ENCODE measurements at regions of chr7 and their contacts with region 1.

Region 1: DNA sequence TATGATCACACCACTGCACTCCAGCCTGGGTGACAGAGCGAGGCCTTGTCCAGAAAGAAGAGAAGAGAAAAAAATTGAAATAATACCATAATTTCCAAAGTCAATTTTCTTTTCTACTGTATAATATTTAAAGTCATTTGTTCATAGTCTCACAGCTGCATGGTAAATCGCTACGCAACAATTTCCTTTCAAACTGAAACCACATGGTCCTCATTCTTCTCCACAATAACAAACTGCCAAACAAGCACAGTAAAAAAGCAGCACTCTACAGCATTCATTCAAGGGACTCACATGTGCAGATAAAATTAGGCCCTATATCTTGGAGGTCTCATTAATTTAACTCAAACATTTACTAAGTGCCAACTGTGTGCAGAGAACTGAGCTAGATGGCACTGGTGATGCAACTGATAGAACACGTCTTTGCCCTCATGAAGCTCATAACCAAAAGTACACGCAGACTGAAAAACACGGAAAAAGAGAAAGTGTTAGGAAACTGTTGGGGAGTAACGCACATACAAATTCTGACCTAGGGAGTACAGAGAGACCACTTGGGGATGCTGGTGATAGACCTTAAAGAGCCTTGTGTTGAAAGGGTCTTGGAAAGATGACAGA is 68.4 kb upstream of the SRRM3 start:
- DNase-seq: no peak
- ATAC-seq: no peak
- H3K4me3 ChIP-seq: no peak overlapping the region
- H3K27ac ChIP-seq: no peak overlapping the region
- H3K4me1 ChIP-seq: no peaks in the 10 kb centered on the region
- H3K27me3 ChIP-seq: no peaks in the 10 kb centered on the region
- CTCF ChIP-seq: no peak
- POLR2A ChIP-seq: no peak
- RAD21 ChIP-seq: no peak

Region 2: DNA sequence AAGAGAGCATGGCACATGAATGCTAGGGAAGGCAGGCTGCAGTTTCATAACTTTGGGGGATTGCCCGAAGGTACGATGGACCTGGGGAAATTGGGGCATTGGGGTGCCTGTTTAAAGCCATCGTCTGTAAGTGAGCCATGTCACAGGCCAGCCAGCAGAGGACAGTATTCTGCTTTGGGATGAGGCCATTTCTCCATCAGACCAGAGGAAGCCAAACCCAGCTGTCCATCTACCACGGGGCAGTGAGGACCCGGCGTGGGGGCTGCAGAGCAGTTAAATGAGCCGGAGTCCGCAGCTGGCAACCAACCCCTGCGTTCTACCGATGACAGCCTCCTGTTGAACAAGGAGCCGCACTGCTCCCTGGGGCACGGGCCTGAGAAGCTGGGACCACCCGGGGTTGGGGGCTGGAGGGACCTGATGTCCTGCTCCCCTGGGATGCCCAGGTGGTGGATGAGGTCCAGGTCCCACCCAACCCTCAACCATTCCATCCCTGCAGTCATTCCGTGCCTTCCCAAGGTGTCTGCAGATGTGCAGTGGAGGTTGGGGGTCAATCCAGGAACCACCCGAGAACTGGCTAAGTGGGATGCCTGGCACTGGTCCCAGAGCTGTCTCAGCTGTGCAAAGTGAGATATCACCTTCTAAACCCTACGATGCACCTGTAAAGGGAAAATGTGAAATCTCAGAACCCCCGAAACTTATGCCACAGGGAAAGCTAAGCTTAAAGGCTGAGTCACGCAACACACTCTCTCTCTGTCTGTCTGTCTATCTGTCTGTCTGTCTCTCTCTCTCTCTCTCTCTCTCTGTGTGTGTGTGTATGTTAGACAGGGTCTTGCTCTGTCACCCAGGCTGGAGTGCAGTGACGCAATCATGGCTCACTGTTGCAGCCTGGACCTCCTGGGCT is 266.5 kb before region 1 on chr7:
- CTCF ChIA-PET with region 1: no interaction called
- POLR2A ChIA-PET with region 1: no interaction called
- RAD21 ChIA-PET with region 1: no interaction called
- intact Hi-C with region 1: loop called (anchors 2 kb)
- DNase-seq: peak; percentile 48
- ATAC-seq: peak; percentile 94
- H3K4me3 ChIP-seq: no peak overlapping the region
- H3K27ac ChIP-seq: no peak overlapping the region
- H3K4me1 ChIP-seq: peaks cover 0 to 8% of the 10 kb centered on the region in 2 experiments; a peak in 2 of 4 replicates
- H3K27me3 ChIP-seq: no peaks in the 10 kb centered on the region
- CTCF ChIP-seq: peak; percentile 92 to 98 (median 92)
- POLR2A ChIP-seq: no peak
- RAD21 ChIP-seq: peak; percentile 99

Region 3: GRCh38 chr7:76047811-76048667 is 85.2 kb before region 1 on chr7 and contains the starts of genes MDH2 and STYXL1:
- CTCF ChIA-PET with region 1: no interaction called
- POLR2A ChIA-PET with region 1: no interaction called
- RAD21 ChIA-PET with region 1: no interaction called
- intact Hi-C with region 1: loop called (anchors 5 kb)
- DNase-seq: peak; percentile 91
- ATAC-seq: peak; percentile 95
- H3K4me3 ChIP-seq: peak within 1 kb of the TSS; percentile 88 to 98
- H3K27ac ChIP-seq: peak within 1 kb of the TSS; percentile 82
- H3K4me1 ChIP-seq: peaks cover 5 to 21% of the 10 kb centered on the region in 2 experiments
- H3K27me3 ChIP-seq: no peaks in the 10 kb centered on the region
- CTCF ChIP-seq: no peak
- POLR2A ChIP-seq: peak; percentile 75
- RAD21 ChIP-seq: no peak
- total RNA-seq, gene MDH2: 357 TPM
- total RNA-seq, gene STYXL1: 32.5 TPM

Region 4: GRCh38 chr7:76069238-76069638 is 64.0 kb before region 1 on chr7:
- CTCF ChIA-PET with region 1: no interaction called
- POLR2A ChIA-PET with region 1: no interaction called
- RAD21 ChIA-PET with region 1: no interaction called
- intact Hi-C with region 1: loop called (anchors 5 kb)
- DNase-seq: peak; percentile 65
- ATAC-seq: peak; percentile 80
- H3K4me3 ChIP-seq: no peak overlapping the region
- H3K27ac ChIP-seq: no peak overlapping the region
- H3K4me1 ChIP-seq: peaks cover 10% of the 10 kb centered on the region in 2 experiments
- H3K27me3 ChIP-seq: no peaks in the 10 kb centered on the region
- CTCF ChIP-seq: peak; percentile 33 to 43 (median 35); a peak in 4 of 6 replicates
- POLR2A ChIP-seq: no peak
- RAD21 ChIP-seq: peak; percentile 72

Measured in HCT116 (cell line).